ENCODE measurements at regions of chr17 and their contacts with region 1.

Region 1: DNA sequence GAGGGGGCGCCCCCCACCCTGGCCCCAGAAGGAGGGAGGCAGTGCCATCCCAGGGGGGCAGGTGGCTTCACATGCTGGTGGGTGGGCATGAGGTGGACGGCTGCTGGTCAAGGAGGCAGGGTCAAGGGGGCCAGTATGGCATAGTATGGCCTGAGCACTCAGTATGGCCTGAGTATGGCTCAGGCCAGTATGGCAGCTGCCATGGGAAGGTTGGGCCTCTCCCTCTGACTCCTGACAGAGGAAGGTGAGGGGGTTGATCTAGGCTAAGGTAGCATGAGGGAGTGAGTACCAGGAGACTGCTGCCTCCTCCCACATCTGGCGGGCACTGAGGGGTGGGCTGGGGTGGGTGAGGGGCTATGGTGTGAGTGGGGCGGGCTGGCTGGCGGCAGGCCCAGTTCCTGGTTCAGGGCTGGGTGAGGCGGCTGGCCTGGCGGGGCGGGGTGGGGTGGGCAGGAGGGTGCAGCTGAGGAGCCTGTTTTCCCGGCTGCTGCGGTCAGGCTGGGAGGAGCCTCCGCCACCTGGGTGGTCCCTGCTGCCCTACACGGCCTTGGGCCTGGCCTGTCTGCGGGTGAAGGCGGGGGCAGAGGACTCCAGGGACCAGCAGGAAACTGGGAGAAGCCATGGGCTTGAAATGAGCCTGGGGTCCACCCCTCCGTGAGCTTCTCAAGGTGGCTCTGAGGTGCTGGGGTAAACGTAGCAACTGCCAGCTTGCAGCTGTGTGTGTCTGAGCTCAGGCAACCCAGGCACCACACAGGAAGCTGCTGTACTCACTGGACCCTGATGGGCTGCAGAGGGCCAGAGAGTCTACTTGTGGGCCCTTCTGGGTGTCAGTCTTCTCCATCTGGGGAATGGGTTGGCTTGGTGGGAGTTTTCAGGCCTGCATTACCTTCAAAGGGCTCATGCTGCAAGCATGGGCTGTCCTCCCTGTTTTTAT is 57.0 kb downstream of the RAI1 start:
- DNase-seq: peak; percentile 68 to 94
- H3K4me3 ChIP-seq: peak overlapping the region; percentile 24; the same call in 1 of the 2 replicates
- H3K27ac ChIP-seq: peak overlapping the region; percentile 77
- H3K4me1 ChIP-seq: peaks cover 53% of the 10 kb centered on the region
- H3K27me3 ChIP-seq: no peaks in the 10 kb centered on the region
- CTCF ChIP-seq: no peak

Region 2: GRCh38 chr17:17694169-17695081 is 43.8 kb before region 1 on chr17:
- CTCF ChIA-PET with region 1: interaction called, 9 read pairs
- POLR2A ChIA-PET with region 1: interaction called, 4 read pairs
- intact Hi-C with region 1: loop called (anchors 1 kb)
- DNase-seq: peak; percentile 72 to 76
- H3K4me3 ChIP-seq: peak overlapping the region; percentile 96
- H3K27ac ChIP-seq: peak overlapping the region; percentile 94
- H3K4me1 ChIP-seq: peaks cover 88% of the 10 kb centered on the region
- H3K27me3 ChIP-seq: no peaks in the 10 kb centered on the region
- CTCF ChIP-seq: no peak

Region 3: DNA sequence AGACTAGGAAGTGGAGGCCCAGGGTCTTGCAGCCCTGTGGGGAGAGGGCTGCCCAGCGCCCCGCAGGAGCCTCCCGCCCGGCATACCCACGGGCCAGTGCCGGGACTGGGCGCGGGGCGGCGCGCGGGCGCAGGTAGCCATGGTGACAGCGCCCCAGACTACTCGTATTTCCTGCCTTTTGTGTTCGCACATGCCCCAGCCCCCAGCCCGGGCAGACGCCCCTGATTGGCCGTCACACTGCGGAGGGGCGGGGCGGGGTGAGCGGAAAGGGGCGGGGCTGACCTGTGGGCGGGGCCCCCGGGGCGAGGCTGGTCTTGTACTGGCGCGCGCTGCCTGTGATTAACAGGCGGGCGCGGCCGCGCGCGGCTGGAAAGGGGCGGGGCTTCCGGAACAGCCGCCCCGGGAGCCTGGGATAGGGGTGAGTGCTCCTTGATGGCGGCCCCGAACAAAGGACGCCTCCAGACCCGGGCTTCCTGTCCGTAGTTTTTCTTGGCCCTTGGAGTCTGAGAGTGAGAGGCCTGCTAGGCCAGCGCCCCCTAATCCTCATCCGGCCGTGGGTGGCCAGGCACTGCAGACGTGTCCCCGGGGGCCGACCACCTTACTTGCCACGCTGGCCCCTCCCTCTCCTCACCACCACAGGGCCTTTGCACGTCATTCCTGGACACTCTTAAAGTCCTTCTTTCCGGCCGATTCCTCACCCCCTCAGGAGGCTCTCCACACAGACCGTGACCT is 14.0 kb after region 1 on chr17:
- CTCF ChIA-PET with region 1: no interaction called
- POLR2A ChIA-PET with region 1: no interaction called
- intact Hi-C with region 1: loop called (anchors 1 kb)
- DNase-seq: peak; percentile 87 to 99
- H3K4me3 ChIP-seq: peak overlapping the region; percentile 56; the same call in 1 of the 2 replicates
- H3K27ac ChIP-seq: peak overlapping the region; percentile 34
- H3K4me1 ChIP-seq: peaks cover 24% of the 10 kb centered on the region
- H3K27me3 ChIP-seq: no peaks in the 10 kb centered on the region
- CTCF ChIP-seq: peak; percentile 52; the same call in 1 of the 2 replicates